ENCODE measurements at regions of chr9 and their contacts with region 1.

Region 1: DNA sequence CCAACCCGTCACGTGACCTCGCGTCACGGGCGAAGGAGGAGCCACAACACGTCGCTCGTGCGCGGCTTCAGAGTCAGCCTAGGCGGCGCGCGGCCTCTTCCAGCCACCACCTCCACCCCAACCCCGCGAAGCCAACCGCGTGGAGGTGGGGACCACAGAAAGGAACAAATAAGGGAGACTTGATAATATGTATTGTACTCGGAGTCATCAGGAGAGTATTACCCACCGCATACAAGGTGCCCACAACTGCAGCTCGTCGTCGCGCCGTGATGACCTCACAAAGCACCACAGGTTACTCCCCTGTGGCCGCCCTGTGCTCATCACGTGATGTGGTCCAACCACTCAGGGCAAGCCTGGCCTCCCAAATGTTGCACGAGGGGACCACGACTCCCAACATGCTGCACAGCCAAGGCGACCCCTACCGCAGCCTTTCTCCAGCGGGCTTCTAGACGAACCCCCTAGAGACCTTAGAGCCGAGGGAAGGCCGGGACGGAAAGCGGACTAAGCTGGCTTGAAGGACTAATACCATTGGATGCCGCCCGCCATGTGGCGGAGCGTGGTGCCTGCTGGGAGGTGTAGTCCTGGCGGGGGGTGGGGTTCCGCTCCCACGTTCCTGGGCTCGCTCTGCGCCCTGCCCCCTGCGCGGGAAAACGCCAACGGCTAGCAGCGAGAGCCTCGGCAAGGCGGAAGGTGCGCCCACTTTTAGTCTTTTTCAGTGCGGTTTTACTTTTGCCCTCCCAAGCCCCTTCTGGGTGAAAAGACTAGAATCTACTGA is 423 bp upstream of the UBAP2 start:
- DNase-seq: peak; percentile 96 to 99 (median 97)
- ATAC-seq: peak; percentile 93
- H3K4me3 ChIP-seq: peak overlapping the region; percentile 98
- H3K4me3 Mint-ChIP-seq: peak overlapping the region; percentile 96 to 100 (median 98)
- H3K27ac ChIP-seq: peak overlapping the region; percentile 86
- H3K27ac Mint-ChIP-seq: peak overlapping the region; percentile 98 to 100 (median 99)
- H3K4me1 ChIP-seq: peaks cover 11 to 22% of the 10 kb centered on the region in 2 donors
- H3K4me1 Mint-ChIP-seq: peaks cover 25 to 55% (median 31%) of the 10 kb centered on the region in 7 donors
- H3K27me3 ChIP-seq: no peaks in the 10 kb centered on the region
- H3K27me3 Mint-ChIP-seq: peaks cover 0 to 4% (median 0%) of the 10 kb centered on the region in 5 donors

Region 2: DNA sequence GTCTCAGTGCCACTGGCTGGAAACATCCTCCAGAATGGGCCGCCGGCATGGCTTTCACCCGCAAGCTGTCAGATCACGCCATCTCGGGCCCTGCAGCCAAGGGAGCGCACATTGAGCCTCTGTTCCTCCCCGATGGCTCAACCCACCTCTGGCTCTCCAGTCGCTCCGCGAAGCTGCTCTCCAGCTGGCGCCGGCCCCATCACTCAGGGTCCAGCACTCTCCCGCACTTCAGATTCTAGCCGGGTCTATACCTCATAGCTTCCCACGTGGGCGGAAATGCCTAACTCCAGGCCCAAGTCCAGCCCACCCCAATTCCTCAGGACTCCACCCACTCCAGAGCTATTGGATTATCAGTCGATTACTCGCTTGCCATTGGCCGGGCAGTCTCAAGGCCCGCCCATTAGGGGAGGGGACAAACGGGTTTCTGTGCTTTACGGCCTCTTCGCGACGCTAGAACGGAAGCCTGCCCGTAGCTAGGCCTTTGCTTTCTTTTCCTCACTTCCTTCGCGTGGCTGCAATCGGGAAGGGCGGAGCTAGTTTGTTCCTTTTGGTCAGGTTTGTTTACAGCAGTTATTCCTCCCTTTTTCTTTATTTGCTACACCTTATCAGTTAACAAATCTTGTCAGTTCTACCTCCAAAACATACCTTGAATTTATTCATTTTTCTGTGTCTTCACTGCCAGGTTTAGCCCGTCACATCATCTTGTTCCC is 575.3 kb before region 1 on chr9 and contains the start of gene NOL6:
- CTCF ChIA-PET with region 1: no interaction called
- POLR2A ChIA-PET with region 1: no interaction called
- intact Hi-C with region 1: loop called in 1 of 2 experiments (anchors 1 kb)
- DNase-seq: peak; percentile 91 to 99 (median 98)
- ATAC-seq: peak; percentile 100
- H3K4me3 ChIP-seq: peak within 1 kb of the TSS; percentile 88
- H3K4me3 Mint-ChIP-seq: peak within 1 kb of the TSS; percentile 88 to 100 (median 97)
- H3K27ac ChIP-seq: peak within 1 kb of the TSS; percentile 78
- H3K27ac Mint-ChIP-seq: peak within 1 kb of the TSS; percentile 88 to 99 (median 96)
- H3K4me1 ChIP-seq: peaks cover 13 to 19% of the 10 kb centered on the region in 2 donors
- H3K4me1 Mint-ChIP-seq: peaks cover 9 to 38% (median 31%) of the 10 kb centered on the region in 7 donors
- H3K27me3 ChIP-seq: no peaks in the 10 kb centered on the region
- H3K27me3 Mint-ChIP-seq: no peaks in the 10 kb centered on the region
- total RNA-seq, gene NOL6: 34.0 to 48.0 (median 44.0) TPM

Region 3: DNA sequence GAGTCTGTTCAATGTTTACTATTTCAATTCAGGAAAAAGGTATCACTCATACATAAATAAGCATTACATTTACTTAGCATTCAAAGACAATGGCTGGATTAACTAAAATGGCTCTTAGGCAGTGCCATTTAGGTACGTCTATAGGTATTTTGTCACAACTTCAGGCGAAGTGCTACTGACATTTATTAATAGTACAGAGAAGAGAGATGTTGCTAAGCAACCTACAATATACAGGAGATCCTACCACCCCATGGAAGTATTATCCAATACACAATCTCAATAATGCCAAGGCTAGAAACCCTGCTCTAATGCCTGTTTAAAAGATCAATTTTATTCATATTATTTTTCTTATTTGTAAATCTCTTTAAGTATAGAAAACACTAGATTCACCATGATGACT is 76.4 kb before region 1 on chr9:
- CTCF ChIA-PET with region 1: no interaction called
- POLR2A ChIA-PET with region 1: no interaction called
- intact Hi-C with region 1: no loop called
- DNase-seq: no peak
- ATAC-seq: no peak
- H3K4me3 ChIP-seq: no peak overlapping the region
- H3K4me3 Mint-ChIP-seq: no peak overlapping the region
- H3K27ac ChIP-seq: no peak overlapping the region
- H3K27ac Mint-ChIP-seq: no peak overlapping the region
- H3K4me1 ChIP-seq: no peaks in the 10 kb centered on the region
- H3K4me1 Mint-ChIP-seq: no peaks in the 10 kb centered on the region
- H3K27me3 ChIP-seq: no peaks in the 10 kb centered on the region
- H3K27me3 Mint-ChIP-seq: no peaks in the 10 kb centered on the region

Region 4: GRCh38 chr9:34059281-34059680 is 10.2 kb after region 1 on chr9:
- CTCF ChIA-PET with region 1: no interaction called
- POLR2A ChIA-PET with region 1: no interaction called
- intact Hi-C with region 1: no loop called
- DNase-seq: no peak
- ATAC-seq: no peak
- H3K4me3 ChIP-seq: no peak overlapping the region
- H3K4me3 Mint-ChIP-seq: no peak overlapping the region
- H3K27ac ChIP-seq: no peak overlapping the region
- H3K27ac Mint-ChIP-seq: no peak overlapping the region
- H3K4me1 ChIP-seq: no peaks in the 10 kb centered on the region
- H3K4me1 Mint-ChIP-seq: no peaks in the 10 kb centered on the region
- H3K27me3 ChIP-seq: no peaks in the 10 kb centered on the region
- H3K27me3 Mint-ChIP-seq: peaks cover 0 to 10% (median 0%) of the 10 kb centered on the region in 5 donors

Region 5: DNA sequence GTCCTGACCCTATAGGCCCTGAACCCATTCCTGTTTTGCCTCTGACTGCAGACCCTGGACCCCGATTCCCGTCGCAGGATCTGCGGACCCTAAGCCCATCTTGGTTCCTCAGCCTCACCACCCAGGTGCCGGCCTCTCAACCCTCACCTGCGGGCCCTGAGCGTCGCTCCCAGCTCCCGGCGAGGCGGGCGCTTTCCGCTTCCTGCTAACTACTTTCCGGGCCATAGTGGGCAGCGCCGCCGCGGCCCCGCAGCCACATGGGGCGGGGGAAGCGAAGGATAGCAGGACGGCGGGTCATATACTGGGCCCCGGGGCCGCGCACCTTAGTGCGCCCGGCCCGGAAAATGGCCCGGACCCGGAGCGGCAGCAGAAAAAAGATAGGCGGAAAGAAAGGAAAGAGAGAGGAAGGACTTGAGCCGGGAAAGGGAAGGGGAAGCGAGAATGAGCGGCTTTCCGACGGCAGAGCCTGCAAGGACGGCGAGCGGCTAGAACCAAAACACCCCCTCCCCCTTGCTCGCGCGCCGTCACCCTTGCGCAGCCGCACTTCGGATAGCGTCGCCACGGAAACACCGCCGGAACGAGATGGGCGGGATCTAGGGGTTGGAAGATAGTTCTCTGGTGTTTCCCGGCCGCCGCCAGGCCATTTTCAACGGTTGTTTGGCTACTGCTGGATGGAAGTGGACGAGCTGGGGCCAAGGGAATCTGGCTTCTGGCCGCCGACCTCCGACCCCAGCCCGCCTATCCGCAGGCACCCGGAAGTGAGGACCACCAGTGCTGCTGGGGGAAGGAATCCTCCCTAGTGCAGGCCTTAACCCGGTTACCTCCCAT is 77.3 kb after region 1 on chr9 and contains the start of gene DCAF12:
- CTCF ChIA-PET with region 1: no interaction called
- POLR2A ChIA-PET with region 1: no interaction called
- intact Hi-C with region 1: loop called (anchors 1 kb)
- DNase-seq: peak; percentile 84 to 92 (median 89)
- ATAC-seq: peak; percentile 96
- H3K4me3 ChIP-seq: peak within 1 kb of the TSS; percentile 92
- H3K4me3 Mint-ChIP-seq: peak within 1 kb of the TSS; percentile 92 to 99 (median 98)
- H3K27ac ChIP-seq: peak within 1 kb of the TSS; percentile 93
- H3K27ac Mint-ChIP-seq: peak within 1 kb of the TSS; percentile 94 to 99 (median 98)
- H3K4me1 ChIP-seq: peaks cover 24 to 34% of the 10 kb centered on the region in 2 donors
- H3K4me1 Mint-ChIP-seq: peaks cover 39 to 56% (median 44%) of the 10 kb centered on the region in 7 donors
- H3K27me3 ChIP-seq: no peaks in the 10 kb centered on the region
- H3K27me3 Mint-ChIP-seq: peaks cover 0 to 2% (median 0%) of the 10 kb centered on the region in 5 donors
- total RNA-seq, gene DCAF12: 10.8 to 40.4 (median 28.5) TPM

Region 6: DNA sequence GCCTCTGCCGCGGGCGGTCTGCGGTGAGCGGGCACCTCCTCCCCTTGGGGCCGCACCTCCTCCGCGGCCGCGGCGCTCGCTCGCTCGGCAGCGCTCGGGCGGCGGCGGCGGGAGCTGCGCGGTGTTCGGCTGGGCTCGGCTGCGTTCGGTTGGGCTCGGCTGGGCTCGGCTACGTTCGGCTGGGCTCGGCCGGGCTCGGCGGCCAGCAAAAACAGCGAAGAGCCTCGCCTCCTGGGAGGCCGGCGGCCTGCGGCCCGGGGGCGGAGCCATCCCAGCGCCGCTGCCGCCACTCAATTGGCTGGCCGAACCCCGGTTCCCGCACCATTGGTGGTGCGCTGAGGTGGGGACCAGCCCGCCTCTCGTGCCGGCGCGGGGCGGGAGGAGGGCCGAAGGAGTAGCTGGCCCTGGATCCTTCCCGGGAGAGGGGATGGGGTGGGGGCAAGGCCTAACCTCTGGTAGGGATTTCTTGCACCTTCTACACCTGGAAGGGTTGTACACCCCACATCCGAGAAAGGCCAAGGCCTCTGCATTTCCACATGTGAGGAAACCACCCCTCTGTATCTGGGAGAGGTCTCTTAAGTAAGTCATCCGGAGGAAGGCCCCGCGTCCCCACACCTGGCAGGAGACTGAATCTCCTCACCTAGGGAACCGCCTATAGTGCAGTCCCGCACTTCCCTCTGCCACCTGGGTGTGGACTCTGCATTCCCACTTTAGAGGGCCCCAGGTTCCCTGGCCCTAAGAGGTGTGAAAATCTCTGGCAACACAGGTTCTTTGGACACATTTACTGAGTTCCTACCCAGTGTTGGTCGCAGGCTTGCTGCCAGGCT is 474.1 kb after region 1 on chr9 and contains the start of gene ENHO:
- CTCF ChIA-PET with region 1: no interaction called
- POLR2A ChIA-PET with region 1: no interaction called
- intact Hi-C with region 1: loop called in 1 of 2 experiments (anchors 2 kb)
- DNase-seq: peak; percentile 77 to 97 (median 91)
- ATAC-seq: peak; percentile 97
- H3K4me3 ChIP-seq: peak within 1 kb of the TSS; percentile 66
- H3K4me3 Mint-ChIP-seq: peak within 1 kb of the TSS; percentile 70 to 83 (median 78)
- H3K27ac ChIP-seq: peak within 1 kb of the TSS; percentile 61
- H3K27ac Mint-ChIP-seq: peak within 1 kb of the TSS in 7 of 9 donors; percentile 18 to 79 (median 61)
- H3K4me1 ChIP-seq: peaks cover 7 to 10% of the 10 kb centered on the region in 2 donors
- H3K4me1 Mint-ChIP-seq: peaks cover 5 to 19% (median 10%) of the 10 kb centered on the region in 7 donors
- H3K27me3 ChIP-seq: no peaks in the 10 kb centered on the region
- H3K27me3 Mint-ChIP-seq: peaks cover 0 to 55% (median 8%) of the 10 kb centered on the region in 5 donors
- total RNA-seq, gene ENHO: 0.56 to 1.9 TPM in 2 of 5 experiments, not detected in the others